ENCODE measurements at regions of chr3 and their contacts with region 1.

Region 1: GRCh38 chr3:56801662-56802377 is at the start of gene ARHGEF3:
- DNase-seq: peak; percentile 89
- ATAC-seq: peak; percentile 84
- H3K4me3 Mint-ChIP-seq: peak within 1 kb of the TSS; percentile 83
- H3K27ac Mint-ChIP-seq: peak within 1 kb of the TSS; percentile 84
- H3K4me1 Mint-ChIP-seq: peaks cover 28% of the 10 kb centered on the region
- H3K27me3 Mint-ChIP-seq: no peaks in the 10 kb centered on the region
- total RNA-seq, gene ARHGEF3: 94.6 to 101 TPM

Region 2: GRCh38 chr3:56702490-56703315 is 99.1 kb before region 1 on chr3:
- CTCF ChIA-PET with region 1: interaction called, 278 read pairs
- POLR2A ChIA-PET with region 1: interaction called, 83 read pairs
- DNase-seq: peak; percentile 74
- ATAC-seq: peak; percentile 73
- H3K4me3 Mint-ChIP-seq: no peak overlapping the region
- H3K27ac Mint-ChIP-seq: no peak overlapping the region
- H3K4me1 Mint-ChIP-seq: peaks cover 34% of the 10 kb centered on the region
- H3K27me3 Mint-ChIP-seq: no peaks in the 10 kb centered on the region

Region 3: DNA sequence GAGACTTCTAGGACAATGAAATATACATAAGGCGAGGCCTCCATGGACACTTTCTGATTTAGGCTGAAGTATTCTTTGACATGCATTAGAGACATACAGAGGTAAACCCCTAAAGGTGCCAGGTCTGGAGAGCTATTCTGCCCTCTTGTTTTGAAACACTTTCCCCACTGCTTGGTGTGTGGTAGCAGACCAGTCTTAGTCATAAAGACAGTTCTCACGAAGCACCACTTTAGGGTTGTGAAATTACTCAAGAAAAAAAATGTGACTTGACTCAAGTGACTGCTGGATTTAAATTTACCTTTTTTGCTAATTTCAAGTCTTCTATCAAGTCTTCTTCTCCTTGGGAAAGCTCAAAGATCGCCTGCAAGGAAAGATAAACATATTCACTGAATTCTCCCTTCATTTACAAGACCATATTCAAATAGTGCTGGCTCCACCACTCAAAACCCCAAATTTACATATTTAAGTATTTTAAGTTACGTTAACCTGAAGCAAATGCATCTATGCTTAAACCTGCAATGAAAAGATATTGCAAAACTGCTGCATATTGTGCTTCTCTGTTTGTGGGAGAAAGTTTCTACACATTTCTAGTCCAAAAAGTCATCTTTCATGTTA is 48.5 kb before region 1 on chr3:
- CTCF ChIA-PET with region 1: interaction called, 242 read pairs
- POLR2A ChIA-PET with region 1: interaction called, 98 read pairs
- DNase-seq: peak; percentile 62
- ATAC-seq: peak; percentile 71
- H3K4me3 Mint-ChIP-seq: peak overlapping the region; percentile 48
- H3K27ac Mint-ChIP-seq: peak overlapping the region; percentile 79
- H3K4me1 Mint-ChIP-seq: peaks cover 73% of the 10 kb centered on the region
- H3K27me3 Mint-ChIP-seq: no peaks in the 10 kb centered on the region

Region 4: GRCh38 chr3:56783644-56784447 is 18.0 kb before region 1 on chr3:
- CTCF ChIA-PET with region 1: interaction called, 290 read pairs
- POLR2A ChIA-PET with region 1: interaction called, 309 read pairs
- DNase-seq: peak; percentile 90
- ATAC-seq: peak; percentile 84
- H3K4me3 Mint-ChIP-seq: peak overlapping the region; percentile 74
- H3K27ac Mint-ChIP-seq: peak overlapping the region; percentile 91
- H3K4me1 Mint-ChIP-seq: peaks cover 98% of the 10 kb centered on the region
- H3K27me3 Mint-ChIP-seq: no peaks in the 10 kb centered on the region

Region 5: DNA sequence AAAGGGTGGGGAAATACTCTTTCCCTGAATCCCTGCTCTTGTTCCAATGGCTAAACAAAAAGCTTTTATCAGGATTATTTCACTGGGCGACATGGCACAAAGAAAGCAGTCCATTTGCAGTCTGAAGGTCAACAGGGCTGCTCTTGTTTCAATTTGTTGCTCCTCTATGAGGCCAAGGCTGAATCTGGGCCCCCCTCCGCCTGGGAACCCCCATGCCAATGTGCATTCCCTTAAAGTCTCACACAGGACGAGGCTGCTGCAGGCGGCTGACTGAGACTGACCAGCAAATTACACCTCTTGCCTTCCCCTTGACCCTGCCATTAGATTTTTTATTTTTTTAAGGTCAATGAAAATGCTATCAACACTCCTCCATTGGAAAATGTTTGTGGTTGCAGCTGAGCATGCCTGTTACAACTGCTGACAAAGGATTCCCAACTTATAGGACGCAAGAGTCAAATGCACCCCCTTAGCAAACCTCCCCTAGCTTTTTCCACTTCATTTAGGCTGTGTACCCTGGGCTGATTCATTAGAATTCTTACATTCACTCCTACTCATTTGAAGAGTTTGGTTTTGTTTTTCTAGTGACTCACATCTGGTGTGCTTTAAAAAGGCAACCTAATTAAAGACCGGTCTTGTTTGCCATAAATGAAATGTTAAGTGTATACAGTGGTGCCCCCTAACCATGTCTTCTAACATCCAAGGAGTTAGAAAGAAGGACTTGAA is 60.7 kb after region 1 on chr3:
- CTCF ChIA-PET with region 1: interaction called, 12 read pairs
- POLR2A ChIA-PET with region 1: interaction called, 3 read pairs
- DNase-seq: no peak
- ATAC-seq: peak; percentile 36
- H3K4me3 Mint-ChIP-seq: no peak overlapping the region
- H3K27ac Mint-ChIP-seq: peak overlapping the region; percentile 17
- H3K4me1 Mint-ChIP-seq: peaks cover 55% of the 10 kb centered on the region
- H3K27me3 Mint-ChIP-seq: no peaks in the 10 kb centered on the region

Region 6: GRCh38 chr3:56980798-56981390 is 179.1 kb after region 1 on chr3:
- CTCF ChIA-PET with region 1: interaction called, 196 read pairs
- POLR2A ChIA-PET with region 1: interaction called, 11 read pairs
- DNase-seq: peak; percentile 60
- ATAC-seq: peak; percentile 80
- H3K4me3 Mint-ChIP-seq: no peak overlapping the region
- H3K27ac Mint-ChIP-seq: peak overlapping the region; percentile 65
- H3K4me1 Mint-ChIP-seq: peaks cover 32% of the 10 kb centered on the region
- H3K27me3 Mint-ChIP-seq: no peaks in the 10 kb centered on the region

Region 7: GRCh38 chr3:57627976-57628375 is 826.2 kb after region 1 on chr3:
- CTCF ChIA-PET with region 1: no interaction called
- POLR2A ChIA-PET with region 1: no interaction called
- DNase-seq: no peak
- ATAC-seq: no peak
- H3K4me3 Mint-ChIP-seq: no peak overlapping the region
- H3K27ac Mint-ChIP-seq: no peak overlapping the region
- H3K4me1 Mint-ChIP-seq: no peaks in the 10 kb centered on the region
- H3K27me3 Mint-ChIP-seq: no peaks in the 10 kb centered on the region